ENCODE measurements at regions of chr12 and their contacts with region 1.

Region 1: DNA sequence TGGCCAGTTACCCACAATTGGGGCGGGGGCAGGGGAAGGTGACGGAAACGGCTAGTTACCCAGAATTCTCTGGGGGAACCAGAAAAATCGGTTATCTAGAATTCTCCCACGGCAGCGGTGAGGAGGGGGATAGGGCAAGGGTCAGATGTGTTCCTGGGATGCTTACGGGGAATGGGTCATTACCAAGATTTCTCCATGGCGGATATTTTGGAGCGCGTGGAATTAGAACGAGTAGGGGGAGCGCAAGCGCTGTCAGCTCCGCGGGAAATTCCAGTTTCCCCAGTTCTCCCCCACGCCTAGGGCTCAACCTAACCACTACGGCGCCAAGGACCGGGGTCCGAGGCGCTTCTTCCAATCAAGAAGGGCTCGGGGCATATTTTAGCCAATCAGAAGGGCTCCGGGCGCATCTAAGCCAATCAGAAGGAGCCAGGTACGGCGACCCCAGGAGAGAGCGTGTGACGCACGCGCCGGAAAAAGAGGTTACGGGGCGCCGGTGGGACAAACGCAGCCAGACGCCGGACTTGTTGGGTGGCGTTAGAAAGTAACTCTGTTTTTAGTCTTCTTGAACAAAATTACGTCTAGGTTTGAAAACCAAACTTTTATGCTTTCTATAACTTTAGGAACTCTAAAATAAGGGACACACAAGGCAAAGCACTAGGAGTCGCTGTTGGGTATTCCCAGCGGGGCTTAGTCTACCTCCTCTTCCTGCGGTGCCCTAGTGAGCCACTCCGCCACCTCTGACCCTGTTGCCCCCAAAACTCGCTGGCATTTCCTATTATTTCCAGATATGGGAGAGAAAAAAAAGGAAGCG is at the start of gene PAN2:
- DNase-seq: peak; percentile 77 to 97 (median 93)
- ATAC-seq: peak; percentile 84 to 85 (median 85)
- H3K4me3 ChIP-seq: peak within 1 kb of the TSS; percentile 63 to 88
- H3K4me3 Mint-ChIP-seq: peak within 1 kb of the TSS; percentile 85 to 97 (median 92)
- H3K27ac ChIP-seq: peak within 1 kb of the TSS; percentile 98
- H3K27ac Mint-ChIP-seq: peak within 1 kb of the TSS; percentile 100
- H3K4me1 ChIP-seq: peaks cover 10 to 34% of the 10 kb centered on the region in 2 experiments
- H3K4me1 Mint-ChIP-seq: peaks cover 43 to 53% (median 47%) of the 10 kb centered on the region in 3 donors
- H3K27me3 ChIP-seq: no peaks in the 10 kb centered on the region
- H3K27me3 Mint-ChIP-seq: no peaks in the 10 kb centered on the region
- total RNA-seq, gene PAN2: 126 to 187 (median 164) TPM

Region 2: DNA sequence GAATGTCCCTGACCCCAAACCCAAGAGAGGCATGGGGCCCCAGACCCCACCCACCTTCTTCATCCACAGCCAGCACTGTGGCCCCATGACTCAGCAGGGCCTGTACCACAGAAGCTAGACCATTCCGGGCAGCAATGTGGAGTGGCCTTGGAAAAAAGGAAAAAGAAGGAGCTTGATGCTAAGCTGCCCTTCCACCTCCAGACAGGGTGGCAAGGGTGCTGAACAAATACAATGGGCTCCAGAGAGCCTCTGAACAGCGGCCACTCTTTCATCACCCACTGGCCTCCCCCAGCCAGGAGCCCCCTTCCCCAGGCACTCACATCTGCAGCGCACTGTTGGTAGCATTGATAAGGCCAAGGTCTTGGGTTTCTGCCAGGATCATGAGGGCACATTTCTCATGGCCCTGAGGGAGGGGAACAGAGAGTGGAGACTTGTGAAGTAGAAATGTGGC is 90.1 kb before region 1 on chr12:
- CTCF ChIA-PET with region 1: no interaction called
- POLR2A ChIA-PET with region 1: no interaction called
- DNase-seq: no peak
- ATAC-seq: no peak
- H3K4me3 ChIP-seq: no peak overlapping the region
- H3K4me3 Mint-ChIP-seq: no peak overlapping the region
- H3K27ac ChIP-seq: no peak overlapping the region
- H3K27ac Mint-ChIP-seq: no peak overlapping the region
- H3K4me1 ChIP-seq: peaks cover 0 to 2% of the 10 kb centered on the region in 2 experiments
- H3K4me1 Mint-ChIP-seq: no peaks in the 10 kb centered on the region
- H3K27me3 ChIP-seq: no peaks in the 10 kb centered on the region
- H3K27me3 Mint-ChIP-seq: no peaks in the 10 kb centered on the region

Region 3: DNA sequence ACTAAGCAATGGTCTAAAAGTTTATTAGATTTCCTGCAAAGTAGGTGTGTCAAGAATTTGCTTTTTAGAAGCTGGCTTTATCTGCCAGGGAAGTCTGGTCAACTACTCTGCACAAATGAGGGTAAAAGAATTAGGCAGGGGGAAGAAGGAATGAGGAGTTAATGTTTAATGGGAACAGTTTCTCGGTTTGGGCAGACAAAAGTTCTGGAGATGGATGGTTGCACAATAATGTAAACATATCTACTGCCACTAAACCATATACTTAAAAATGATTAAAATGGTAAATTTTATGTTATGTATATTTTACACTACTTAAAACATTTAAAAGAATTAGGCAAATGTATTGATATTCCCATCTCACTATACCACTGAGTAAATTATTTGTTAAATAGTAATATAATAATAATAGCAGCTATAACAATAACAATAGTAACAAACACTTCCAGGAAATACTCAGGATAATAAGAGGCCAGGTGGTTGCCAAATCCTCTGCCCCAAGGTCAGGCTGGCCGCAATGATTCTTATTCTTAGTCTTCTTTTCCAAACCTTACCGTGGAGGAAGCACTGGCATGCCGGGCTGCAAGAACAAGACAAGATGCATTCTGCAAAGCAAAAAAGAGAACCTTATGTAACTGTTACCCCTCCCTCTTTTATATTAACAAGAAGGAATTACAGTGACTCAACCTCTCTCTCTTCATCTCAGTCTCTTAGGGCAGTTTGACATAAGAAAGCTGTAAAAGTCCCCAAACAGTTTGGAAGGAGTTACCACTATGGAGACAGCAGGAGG is 47.6 kb before region 1 on chr12:
- CTCF ChIA-PET with region 1: no interaction called
- POLR2A ChIA-PET with region 1: no interaction called
- DNase-seq: no peak
- ATAC-seq: no peak
- H3K4me3 ChIP-seq: no peak overlapping the region
- H3K4me3 Mint-ChIP-seq: no peak overlapping the region
- H3K27ac ChIP-seq: no peak overlapping the region
- H3K27ac Mint-ChIP-seq: peak overlapping the region in 1 of 2 donors; percentile 34
- H3K4me1 ChIP-seq: peaks cover 2 to 9% of the 10 kb centered on the region in 2 experiments
- H3K4me1 Mint-ChIP-seq: peaks cover 7 to 23% (median 19%) of the 10 kb centered on the region in 3 donors
- H3K27me3 ChIP-seq: no peaks in the 10 kb centered on the region
- H3K27me3 Mint-ChIP-seq: no peaks in the 10 kb centered on the region

Region 4: GRCh38 chr12:56307221-56307965 is 26.5 kb before region 1 on chr12:
- CTCF ChIA-PET with region 1: interaction called in 1 of 2 experiments, 12 read pairs
- POLR2A ChIA-PET with region 1: interaction called in 1 of 2 experiments, 3 read pairs
- DNase-seq: no peak
- ATAC-seq: no peak
- H3K4me3 ChIP-seq: no peak overlapping the region
- H3K4me3 Mint-ChIP-seq: no peak overlapping the region
- H3K27ac ChIP-seq: no peak overlapping the region
- H3K27ac Mint-ChIP-seq: no peak overlapping the region
- H3K4me1 ChIP-seq: peaks cover 0 to 5% of the 10 kb centered on the region in 2 experiments
- H3K4me1 Mint-ChIP-seq: peaks cover under 1 to 2% (median under 1%) of the 10 kb centered on the region in 3 donors
- H3K27me3 ChIP-seq: no peaks in the 10 kb centered on the region
- H3K27me3 Mint-ChIP-seq: no peaks in the 10 kb centered on the region

Measured in T-cell (primary cell).